Right ventricle myocardium inferior (tissue), 1 donor: ENCODE measurements at regions of chr3 and their contacts with region 1.

Region 1: GRCh38 chr3:49553692-49554632 is at the start of gene BSN:
- DNase-seq: peak; percentile 95
- ATAC-seq: peak; percentile 98
- total RNA-seq, gene BSN: 0.27 TPM

Region 2: DNA sequence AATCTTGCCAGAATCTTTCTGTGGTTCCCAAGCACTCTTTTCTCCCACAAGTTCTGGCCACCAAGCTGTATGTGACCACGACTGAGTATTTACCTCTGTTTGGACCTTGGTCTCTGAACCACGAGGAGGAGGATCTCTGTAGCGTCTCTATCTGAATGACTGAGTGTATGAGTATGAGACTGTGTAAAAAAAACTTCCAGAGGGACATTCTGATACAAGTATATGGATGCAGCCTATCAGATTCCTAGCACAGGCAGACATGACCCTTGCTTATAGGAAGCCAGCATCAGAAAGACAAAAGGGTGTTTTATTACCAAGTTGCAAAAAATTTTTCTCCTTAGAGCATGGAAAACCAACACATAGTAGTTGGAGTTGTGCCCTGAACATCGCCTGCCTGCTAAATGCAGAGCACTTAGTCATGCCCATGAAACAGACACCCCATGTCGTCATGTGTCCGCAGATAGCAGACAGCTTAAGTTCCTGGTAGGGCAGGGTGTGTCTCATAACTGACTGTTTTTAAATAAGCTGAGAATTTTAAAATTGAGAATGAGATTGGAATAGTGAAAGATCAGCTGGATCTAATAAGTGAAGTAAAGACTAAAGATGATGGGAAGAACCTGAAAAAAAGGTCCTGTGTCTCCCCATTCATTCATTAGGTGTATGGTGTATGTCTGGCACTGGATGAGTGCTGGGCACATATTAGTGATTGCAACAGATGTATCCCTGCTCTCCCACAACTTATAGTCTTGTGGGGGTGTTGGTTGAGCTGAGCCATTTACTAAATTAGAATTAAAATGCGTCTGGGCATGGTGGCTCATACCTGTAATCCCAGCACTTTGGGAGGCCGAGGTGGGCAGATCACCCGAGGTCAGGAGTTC is 53.0 kb before region 1 on chr3:
- intact Hi-C with region 1: no loop called
- DNase-seq: no peak
- ATAC-seq: peak; percentile 92

Region 3: GRCh38 chr3:49636883-49637609 is 83.1 kb after region 1 on chr3:
- intact Hi-C with region 1: no loop called
- DNase-seq: peak; percentile 23
- ATAC-seq: no peak

Region 4: DNA sequence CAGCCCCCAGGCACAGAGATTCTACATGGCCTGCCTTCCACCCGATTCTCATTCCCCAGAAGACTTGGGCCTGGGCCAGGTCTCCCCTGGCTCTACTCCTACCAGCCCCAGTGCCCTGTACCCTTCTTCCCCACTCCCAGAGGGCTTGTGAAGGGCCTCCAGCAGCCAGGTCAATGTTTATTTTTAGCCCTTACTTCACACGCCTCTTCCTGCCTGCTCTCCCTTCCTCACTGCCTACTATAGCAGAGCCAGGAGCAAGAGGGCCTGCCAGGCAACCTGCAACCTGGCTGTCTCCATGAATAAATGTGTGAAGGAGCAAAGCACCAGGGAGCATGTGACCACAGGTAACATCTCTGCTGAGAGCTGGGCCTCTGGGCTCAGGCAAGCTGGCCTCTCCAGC is 93.8 kb after region 1 on chr3:
- intact Hi-C with region 1: loop called (anchors 5 kb)
- DNase-seq: no peak
- ATAC-seq: peak; percentile 92